Breast epithelium (tissue), 4 donors: ENCODE measurements at regions of chr13 and their contacts with region 1.

Region 1: GRCh38 chr13:43285933-43286597 is 262.7 kb downstream of the DNAJC15 start:
- DNase-seq: no peak
- H3K4me3 ChIP-seq: no peak overlapping the region
- H3K27ac ChIP-seq: no peak overlapping the region
- H3K4me1 ChIP-seq: no peaks in the 10 kb centered on the region
- H3K27me3 ChIP-seq: no peaks in the 10 kb centered on the region
- CTCF ChIP-seq: no peak
- POLR2A ChIP-seq: no peak

Region 2: DNA sequence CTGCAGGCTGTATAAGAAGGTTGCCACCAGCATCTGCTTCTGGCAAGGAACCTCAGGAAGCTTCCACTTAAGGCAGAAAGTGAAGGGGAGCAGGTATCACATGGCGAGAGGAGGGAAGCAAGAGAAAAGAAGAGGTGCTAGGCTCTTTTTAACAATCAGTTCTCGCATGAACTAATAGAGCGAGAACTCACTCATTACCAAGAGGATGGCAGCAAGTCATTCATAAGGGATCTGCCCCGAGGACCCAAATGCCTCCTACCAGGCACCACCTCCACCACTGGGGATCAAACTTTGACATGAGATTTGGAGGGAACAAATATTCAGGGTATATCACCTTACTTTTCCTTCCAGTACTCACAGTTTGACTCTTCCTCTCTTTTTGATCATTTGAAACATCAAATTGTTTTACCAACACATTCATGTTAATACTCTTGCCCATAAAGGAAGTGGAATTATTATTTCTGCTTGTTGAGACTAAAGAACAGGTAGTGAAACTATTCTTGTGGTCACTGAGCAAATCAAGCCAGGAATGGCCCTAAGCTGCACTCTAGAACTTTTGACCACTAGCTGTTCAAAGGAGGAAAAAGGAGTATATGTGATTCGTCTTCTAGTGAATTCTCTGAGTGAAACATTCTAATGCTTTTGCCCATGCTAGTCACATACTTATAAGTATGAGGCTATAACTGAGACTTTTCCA is 638.6 kb after region 1 on chr13:
- intact Hi-C with region 1: no loop called
- DNase-seq: no peak
- H3K4me3 ChIP-seq: no peak overlapping the region
- H3K27ac ChIP-seq: no peak overlapping the region
- H3K4me1 ChIP-seq: no peaks in the 10 kb centered on the region
- H3K27me3 ChIP-seq: no peaks in the 10 kb centered on the region
- CTCF ChIP-seq: no peak
- POLR2A ChIP-seq: no peak

Region 3: GRCh38 chr13:43981091-43981490 is 695.0 kb after region 1 on chr13:
- intact Hi-C with region 1: loop called (anchors 5 kb)
- DNase-seq: no peak
- H3K4me3 ChIP-seq: no peak overlapping the region
- H3K27ac ChIP-seq: no peak overlapping the region
- H3K4me1 ChIP-seq: no peaks in the 10 kb centered on the region
- H3K27me3 ChIP-seq: no peaks in the 10 kb centered on the region
- CTCF ChIP-seq: no peak
- POLR2A ChIP-seq: no peak